GM10248 (cell line): ENCODE measurements at regions of chr19 and their contacts with region 1.

Region 1: GRCh38 chr19:48391107-48391986 is at the start of gene KDELR1:
- DNase-seq: peak; percentile 92
- CTCF ChIP-seq: peak; percentile 91

Region 2: GRCh38 chr19:48363810-48364563 is 27.4 kb before region 1 on chr19 and contains the starts of genes SYNGR4 and TMEM143:
- CTCF ChIA-PET with region 1: interaction called, 31 read pairs
- POLR2A ChIA-PET with region 1: interaction called, 12 read pairs
- DNase-seq: peak; percentile 99
- CTCF ChIP-seq: no peak

Region 3: DNA sequence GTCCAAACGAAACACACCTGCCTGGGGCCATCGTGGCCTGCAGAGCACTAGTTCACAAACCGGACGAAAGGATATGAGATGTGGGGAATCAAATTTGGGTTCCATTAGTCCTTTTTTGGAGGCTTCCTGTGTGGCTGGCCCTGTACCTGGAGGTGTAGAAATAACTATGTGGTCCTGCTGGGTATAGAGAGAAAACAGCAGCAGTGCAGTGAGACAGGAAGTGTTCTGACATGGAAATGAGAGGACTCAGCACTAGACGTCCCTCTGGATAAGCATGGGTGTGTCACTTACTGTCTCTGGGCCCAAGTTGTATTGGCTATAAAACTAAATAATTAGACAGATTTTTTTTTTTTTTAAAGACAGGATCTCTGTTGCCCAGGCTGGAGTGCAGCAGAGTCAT is 12.3 kb before region 1 on chr19:
- CTCF ChIA-PET with region 1: interaction called, 22 read pairs
- POLR2A ChIA-PET with region 1: no interaction called
- DNase-seq: no peak
- CTCF ChIP-seq: no peak

Region 4: DNA sequence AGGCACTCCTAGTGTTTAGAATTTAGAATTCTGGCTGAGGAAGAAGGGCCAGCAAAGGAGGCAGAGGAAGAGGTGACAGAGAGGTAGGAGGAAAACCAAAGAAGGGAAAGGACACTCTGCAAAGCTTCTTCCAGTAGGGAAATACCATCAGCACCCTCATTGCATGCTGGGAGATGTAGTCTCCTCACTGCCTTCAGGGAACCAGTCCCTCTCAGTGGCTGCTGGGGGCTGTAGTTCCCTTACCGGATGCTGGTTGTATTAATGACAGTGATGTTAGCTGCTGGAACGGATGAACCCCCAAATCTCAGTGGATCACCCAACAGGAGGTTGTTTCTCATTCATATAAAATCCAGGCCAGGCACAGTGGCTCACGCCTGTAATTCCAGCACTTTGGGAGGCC is 12.3 kb after region 1 on chr19:
- CTCF ChIA-PET with region 1: interaction called, 38 read pairs
- POLR2A ChIA-PET with region 1: interaction called, 3 read pairs
- DNase-seq: peak; percentile 84
- CTCF ChIP-seq: no peak